Panc1 (cell line): ENCODE measurements at regions of chr20 and their contacts with region 1.

Region 1: GRCh38 chr20:57513199-57513598 is 11.7 kb downstream of the CTCFL start:
- DNase-seq: no peak
- ATAC-seq: no peak
- H3K4me3 ChIP-seq: no peak overlapping the region
- H3K27ac ChIP-seq: no peak overlapping the region
- H3K4me1 ChIP-seq: no peaks in the 10 kb centered on the region
- H3K27me3 ChIP-seq: no peaks in the 10 kb centered on the region
- CTCF ChIP-seq: no peak

Region 2: DNA sequence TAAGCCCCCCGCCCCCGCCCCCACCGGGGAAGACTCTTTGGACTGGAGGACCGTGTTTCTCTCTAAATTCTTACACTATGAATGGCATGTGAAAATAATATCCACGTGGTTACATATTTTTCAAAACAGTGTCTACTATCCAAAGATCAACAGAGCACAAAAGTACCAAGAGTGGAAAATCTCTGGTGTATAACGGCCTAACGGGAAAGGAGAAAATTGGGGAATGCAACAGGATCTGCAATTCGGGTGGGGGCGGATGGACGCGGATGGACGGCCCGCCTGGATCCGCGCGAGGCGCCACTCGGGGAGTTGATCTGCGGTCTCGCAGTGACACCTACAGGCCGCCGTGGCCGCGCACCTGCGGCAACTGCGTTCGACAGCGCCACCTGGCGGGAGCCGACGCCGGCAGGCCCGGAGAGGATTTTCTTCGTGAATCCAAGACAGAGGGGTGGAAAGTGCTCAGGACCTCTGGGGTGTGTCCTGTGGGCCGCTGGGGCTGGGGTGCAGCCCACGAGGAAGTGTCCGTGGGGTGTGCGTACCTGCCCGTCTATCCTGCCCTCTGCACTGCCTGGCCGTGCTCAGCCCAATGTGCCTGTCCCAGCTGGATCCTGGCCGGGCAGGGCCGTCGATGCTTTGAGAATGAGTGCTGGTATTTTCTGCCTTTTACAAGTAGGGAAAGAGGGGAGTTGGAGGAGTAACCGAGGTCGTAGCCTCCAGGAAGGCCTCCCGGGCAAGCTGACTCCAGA is 696.6 kb after region 1 on chr20:
- CTCF ChIA-PET with region 1: no interaction called
- POLR2A ChIA-PET with region 1: no interaction called
- in situ Hi-C with region 1: no loop called
- intact Hi-C with region 1: loop called (anchors 5 kb)
- DNase-seq: peak; percentile 61
- ATAC-seq: peak; percentile 90
- H3K4me3 ChIP-seq: peak overlapping the region in 1 of 2 experiments; percentile 26; a peak in 1 of 4 replicates
- H3K27ac ChIP-seq: no peak overlapping the region
- H3K4me1 ChIP-seq: peaks cover 2% of the 10 kb centered on the region; the same call in 1 of the 2 replicates
- H3K27me3 ChIP-seq: no peaks in the 10 kb centered on the region
- CTCF ChIP-seq: peak; percentile 100